Psoas muscle (tissue), 8 donors: ENCODE measurements at regions of chr4 and their contacts with region 1.

Region 1: DNA sequence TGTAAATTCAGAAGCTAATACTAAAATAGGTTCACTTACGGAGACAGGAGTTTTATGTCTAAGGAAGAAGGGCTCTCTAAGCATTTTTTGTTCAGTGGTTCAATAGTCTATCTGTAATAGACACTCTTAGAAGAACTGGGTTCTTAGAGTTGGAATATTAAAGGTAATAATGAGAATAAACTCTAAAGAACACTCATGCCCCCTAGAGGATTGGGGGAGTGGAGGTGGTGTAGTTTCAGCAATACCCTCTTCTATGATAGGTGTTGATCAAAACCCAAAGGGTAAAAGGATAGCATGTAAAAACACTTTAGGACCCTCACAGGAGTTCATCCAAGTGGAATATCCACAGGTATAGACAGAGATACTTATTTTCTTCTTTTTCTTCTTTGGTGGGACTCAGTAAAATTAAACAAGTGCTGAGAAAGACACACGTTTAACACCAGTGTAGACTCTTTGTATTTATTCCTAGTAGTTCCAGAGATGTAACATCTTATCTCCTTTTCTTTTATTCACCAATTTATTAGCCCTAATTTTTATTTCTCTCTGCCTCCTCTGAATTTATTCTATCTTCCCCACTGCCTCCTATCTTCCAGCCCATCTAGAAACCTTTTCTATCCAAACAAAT is 25.7 kb upstream of the MND1 start:
- DNase-seq: no peak
- ATAC-seq: peak; percentile 57 to 83 (median 69)
- H3K4me3 ChIP-seq: no peak overlapping the region
- H3K27ac ChIP-seq: no peak overlapping the region
- H3K4me1 ChIP-seq: no peaks in the 10 kb centered on the region
- H3K27me3 ChIP-seq: no peaks in the 10 kb centered on the region
- CTCF ChIP-seq: peak; percentile 75

Region 2: GRCh38 chr4:152843481-152844090 is 475.2 kb before region 1 on chr4:
- intact Hi-C with region 1: no loop called
- DNase-seq: no peak
- ATAC-seq: no peak
- H3K4me3 ChIP-seq: no peak overlapping the region
- H3K27ac ChIP-seq: no peak overlapping the region
- H3K4me1 ChIP-seq: no peaks in the 10 kb centered on the region
- H3K27me3 ChIP-seq: no peaks in the 10 kb centered on the region
- CTCF ChIP-seq: no peak

Region 3: DNA sequence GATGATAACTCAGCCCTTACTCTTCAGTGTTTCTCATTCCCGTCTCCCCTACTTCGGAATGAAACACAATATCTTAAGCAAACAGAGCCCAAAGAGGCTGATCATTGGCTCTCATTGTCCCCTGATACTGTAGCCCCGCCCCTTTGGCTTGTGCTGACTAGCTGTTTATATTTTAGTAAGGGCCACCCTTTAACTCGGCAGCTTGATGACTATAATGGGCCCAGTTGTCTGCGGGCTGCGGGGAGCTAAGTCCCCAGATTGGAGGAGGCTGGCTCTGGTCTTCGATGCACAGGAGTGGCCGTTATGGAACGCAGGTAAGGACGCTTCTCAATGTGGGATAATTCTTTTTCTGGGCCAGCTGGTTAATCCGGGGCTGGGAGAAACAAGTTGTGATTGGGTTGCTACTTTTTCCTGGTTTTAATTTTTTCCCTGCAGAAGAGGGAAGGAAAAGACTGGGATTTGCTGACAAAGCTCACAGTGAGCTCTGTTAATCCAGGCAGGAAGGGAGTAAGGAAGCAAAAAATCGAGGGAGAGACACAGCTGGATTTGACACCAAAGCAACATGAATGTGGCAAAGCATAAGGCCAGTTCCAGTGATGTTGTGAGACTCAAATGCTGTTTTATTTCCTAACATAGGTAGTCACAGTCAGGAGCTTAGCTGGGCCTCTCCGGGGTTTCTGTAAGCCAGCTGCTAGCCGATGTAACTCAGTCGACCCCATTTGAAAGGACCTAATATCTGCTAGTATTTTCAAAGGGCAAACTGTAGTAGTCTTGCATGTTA is 114.4 kb before region 1 on chr4 and contains the start of gene TRIM2:
- intact Hi-C with region 1: loop called (anchors 2 to 5 kb)
- DNase-seq: peak; percentile 64 to 70
- ATAC-seq: peak; percentile 36 to 79 (median 65)
- H3K4me3 ChIP-seq: peak within 1 kb of the TSS; percentile 52
- H3K27ac ChIP-seq: no peak within 1 kb of the TSS
- H3K4me1 ChIP-seq: no peaks in the 10 kb centered on the region
- H3K27me3 ChIP-seq: no peaks in the 10 kb centered on the region
- CTCF ChIP-seq: no peak
- total RNA-seq, gene TRIM2: 3.9 to 7.1 (median 5.6) TPM